WTC11 (cell line): ENCODE measurements at regions of chr14 and their contacts with region 1.

Region 1: GRCh38 chr14:68248481-68249255 is 429.1 kb downstream of the RAD51B start:
- DNase-seq: no peak
- ATAC-seq: peak; percentile 85
- H3K4me3 Mint-ChIP-seq: no peak overlapping the region
- H3K27ac Mint-ChIP-seq: peak overlapping the region; percentile 80
- H3K4me1 Mint-ChIP-seq: peaks cover 91% of the 10 kb centered on the region
- H3K27me3 Mint-ChIP-seq: no peaks in the 10 kb centered on the region; the same call in 1 of the 2 replicates
- CTCF ChIP-seq: peak; percentile 40

Region 2: GRCh38 chr14:68236582-68237458 is 11.8 kb before region 1 on chr14:
- CTCF ChIA-PET with region 1: no interaction called
- POLR2A ChIA-PET with region 1: no interaction called
- DNase-seq: no peak
- ATAC-seq: no peak
- H3K4me3 Mint-ChIP-seq: no peak overlapping the region
- H3K27ac Mint-ChIP-seq: no peak overlapping the region
- H3K4me1 Mint-ChIP-seq: 0 out of 2 replicates have a peak, but pooled peaks cover 4% of the 10 kb centered on the region
- H3K27me3 Mint-ChIP-seq: no peaks in the 10 kb centered on the region
- CTCF ChIP-seq: no peak

Region 3: GRCh38 chr14:68260121-68260520 is 11.5 kb after region 1 on chr14:
- CTCF ChIA-PET with region 1: interaction called, 10 read pairs
- POLR2A ChIA-PET with region 1: no interaction called
- DNase-seq: no peak
- ATAC-seq: no peak
- H3K4me3 Mint-ChIP-seq: no peak overlapping the region
- H3K27ac Mint-ChIP-seq: peak overlapping the region; percentile 98
- H3K4me1 Mint-ChIP-seq: peaks cover 83% of the 10 kb centered on the region
- H3K27me3 Mint-ChIP-seq: no peaks in the 10 kb centered on the region
- CTCF ChIP-seq: no peak

Region 4: GRCh38 chr14:68363843-68364767 is 115.4 kb after region 1 on chr14:
- CTCF ChIA-PET with region 1: interaction called, 14 read pairs
- POLR2A ChIA-PET with region 1: interaction called, 3 read pairs
- DNase-seq: peak; percentile 68
- ATAC-seq: peak; percentile 76
- H3K4me3 Mint-ChIP-seq: peak overlapping the region; percentile 75
- H3K27ac Mint-ChIP-seq: peak overlapping the region; percentile 94
- H3K4me1 Mint-ChIP-seq: peaks cover 42% of the 10 kb centered on the region
- H3K27me3 Mint-ChIP-seq: peaks cover 5% of the 10 kb centered on the region; the same call in 1 of the 2 replicates
- CTCF ChIP-seq: no peak

Region 5: DNA sequence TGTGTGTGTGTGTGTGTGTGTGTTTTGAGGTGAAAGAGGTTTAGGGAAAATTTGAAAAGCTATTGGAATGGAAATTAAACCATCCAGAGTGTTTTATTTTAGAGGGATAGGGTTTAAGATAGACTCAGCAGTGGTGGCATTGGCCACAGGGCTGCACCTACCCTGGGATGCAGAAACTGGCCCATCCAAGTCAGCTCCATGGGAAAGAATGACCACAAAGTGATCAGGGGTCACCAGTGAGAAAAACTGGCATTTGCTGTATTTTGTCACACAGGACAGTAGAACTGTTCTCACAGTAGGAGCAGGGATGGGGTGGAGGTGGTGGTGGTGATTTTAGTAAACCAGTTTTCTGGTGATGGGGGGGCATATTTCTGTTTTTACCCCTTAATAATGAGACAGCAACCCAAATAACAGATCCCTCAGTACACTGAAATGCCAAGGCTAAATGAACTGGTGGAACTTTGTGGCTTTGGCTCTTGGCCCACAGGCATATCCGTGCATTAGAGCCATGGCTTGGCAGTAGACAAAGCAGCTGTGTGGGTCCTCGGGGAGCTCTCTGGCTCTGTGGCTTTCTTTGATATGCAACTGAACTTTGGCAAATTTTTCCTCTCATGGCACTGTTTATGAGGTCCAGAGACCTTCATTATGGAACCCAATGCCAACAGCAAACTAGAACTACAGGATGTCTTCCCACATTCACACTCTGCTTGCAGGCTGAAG is 195.9 kb after region 1 on chr14:
- CTCF ChIA-PET with region 1: no interaction called
- POLR2A ChIA-PET with region 1: no interaction called
- DNase-seq: no peak
- ATAC-seq: no peak
- H3K4me3 Mint-ChIP-seq: no peak overlapping the region
- H3K27ac Mint-ChIP-seq: no peak overlapping the region
- H3K4me1 Mint-ChIP-seq: peaks cover 34% of the 10 kb centered on the region
- H3K27me3 Mint-ChIP-seq: no peaks in the 10 kb centered on the region
- CTCF ChIP-seq: no peak